Naive thymus-derived CD4-positive, alpha-beta T cell (primary cell): ENCODE measurements at regions of chr2 and their contacts with region 1.

Region 1: DNA sequence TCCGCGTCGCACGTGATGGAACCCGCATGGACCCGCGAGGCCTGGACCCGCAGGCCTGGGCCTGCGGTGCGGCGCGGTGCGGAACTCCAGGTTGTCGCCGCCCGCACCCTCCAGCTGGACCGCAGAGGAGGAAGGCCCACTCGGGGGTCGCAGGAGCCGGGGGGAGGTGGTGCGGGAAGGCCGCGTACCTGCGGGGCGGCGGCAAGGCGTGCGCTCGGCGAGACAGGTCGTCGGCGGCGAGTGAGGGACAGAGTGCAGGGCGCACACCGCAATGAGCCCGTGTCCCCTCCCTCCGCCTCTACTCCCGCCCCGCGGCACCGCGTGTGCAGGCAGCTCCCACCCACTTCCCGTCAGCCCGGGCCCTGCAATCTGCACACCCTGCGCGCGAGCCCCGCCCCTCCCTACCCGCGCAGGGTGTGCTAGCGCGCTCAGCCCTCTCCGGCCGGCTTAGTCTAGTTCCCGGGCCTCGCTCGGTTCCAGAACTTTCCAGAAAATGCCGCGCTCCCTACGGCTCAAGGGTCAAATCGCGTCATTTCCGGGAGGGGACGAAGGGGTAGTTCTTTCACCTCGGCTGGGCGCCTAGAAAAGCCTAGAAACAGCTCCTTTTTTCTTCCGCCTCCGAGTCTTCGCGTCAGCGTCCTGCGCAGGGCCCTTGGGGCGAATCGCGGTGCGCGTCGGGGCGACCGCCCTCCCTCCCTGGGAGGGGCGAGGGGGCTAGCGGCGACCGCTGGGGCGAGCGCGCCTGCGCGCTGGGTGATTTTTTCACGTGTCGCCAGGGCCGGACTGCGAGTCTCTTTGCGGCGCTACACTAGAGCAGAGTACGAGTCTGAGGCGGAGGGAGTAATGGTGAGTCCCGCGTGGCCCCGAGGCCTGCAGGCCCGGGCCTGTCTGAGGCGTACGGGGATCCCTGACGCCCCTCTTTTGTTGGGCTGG is at the starts of genes HSPD1 and HSPE1:
- DNase-seq: peak; percentile 89 to 98 (median 97)
- ATAC-seq: peak; percentile 93
- H3K4me3 ChIP-seq: peak within 1 kb of the TSS; percentile 94
- H3K4me3 Mint-ChIP-seq: peak within 1 kb of the TSS; percentile 84 to 100 (median 94)
- H3K27ac ChIP-seq: peak within 1 kb of the TSS; percentile 90
- H3K27ac Mint-ChIP-seq: peak within 1 kb of the TSS; percentile 83 to 98 (median 95)
- H3K4me1 ChIP-seq: peaks cover 17 to 41% of the 10 kb centered on the region in 2 donors
- H3K4me1 Mint-ChIP-seq: peaks cover 31 to 69% (median 57%) of the 10 kb centered on the region in 7 donors
- H3K27me3 ChIP-seq: no peaks in the 10 kb centered on the region
- H3K27me3 Mint-ChIP-seq: no peaks in the 10 kb centered on the region
- total RNA-seq, gene HSPD1: 127 to 276 (median 137) TPM
- total RNA-seq, gene HSPE1: 46.3 to 127 (median 52.2) TPM

Region 2: DNA sequence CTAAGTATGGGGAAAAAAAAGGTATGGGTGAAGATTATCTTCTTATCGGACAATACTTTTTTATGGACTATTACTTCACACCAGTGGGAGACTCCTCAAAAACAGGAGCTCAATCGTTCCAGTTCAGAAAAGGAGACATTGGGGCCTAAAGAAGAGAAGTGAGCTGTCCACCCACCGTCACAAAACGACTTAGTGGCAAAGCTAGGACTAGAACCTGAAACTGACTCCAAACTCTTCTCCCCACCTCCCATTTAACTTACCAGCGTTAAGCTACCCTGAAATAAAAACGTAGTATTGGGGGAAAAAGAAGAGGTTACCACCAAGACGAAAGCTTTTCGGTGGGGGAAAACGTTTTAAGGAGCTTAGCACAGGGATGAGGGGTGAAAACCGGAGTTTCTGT is 700.9 kb before region 1 on chr2:
- CTCF ChIA-PET with region 1: no interaction called
- POLR2A ChIA-PET with region 1: no interaction called
- intact Hi-C with region 1: loop called in 1 of 2 experiments (anchors 5 kb)
- DNase-seq: peak in 1 of 9 donors; percentile 1
- ATAC-seq: peak; percentile 1
- H3K4me3 ChIP-seq: peak overlapping the region; percentile 98
- H3K4me3 Mint-ChIP-seq: peak overlapping the region; percentile 85 to 99 (median 96)
- H3K27ac ChIP-seq: peak overlapping the region; percentile 73
- H3K27ac Mint-ChIP-seq: peak overlapping the region; percentile 89 to 99 (median 91)
- H3K4me1 ChIP-seq: peaks cover 4 to 6% of the 10 kb centered on the region in 2 donors
- H3K4me1 Mint-ChIP-seq: peaks cover 17 to 52% (median 38%) of the 10 kb centered on the region in 7 donors
- H3K27me3 ChIP-seq: no peaks in the 10 kb centered on the region
- H3K27me3 Mint-ChIP-seq: peaks cover 0 to 4% (median 4%) of the 10 kb centered on the region in 5 donors

Region 3: GRCh38 chr2:197209742-197210408 is 290.0 kb before region 1 on chr2:
- CTCF ChIA-PET with region 1: no interaction called
- POLR2A ChIA-PET with region 1: no interaction called
- intact Hi-C with region 1: loop called in 1 of 2 experiments (anchors 10 kb)
- DNase-seq: peak in 5 of 9 donors; percentile 34 to 73 (median 50)
- ATAC-seq: peak; percentile 23
- H3K4me3 ChIP-seq: peak overlapping the region; percentile 12
- H3K4me3 Mint-ChIP-seq: peak overlapping the region; percentile 61 to 86 (median 78)
- H3K27ac ChIP-seq: peak overlapping the region; percentile 82
- H3K27ac Mint-ChIP-seq: peak overlapping the region; percentile 79 to 100 (median 98)
- H3K4me1 ChIP-seq: peaks cover 93 to 98% of the 10 kb centered on the region in 2 donors
- H3K4me1 Mint-ChIP-seq: peaks cover 76 to 99% (median 97%) of the 10 kb centered on the region in 7 donors
- H3K27me3 ChIP-seq: no peaks in the 10 kb centered on the region
- H3K27me3 Mint-ChIP-seq: no peaks in the 10 kb centered on the region

Region 4: DNA sequence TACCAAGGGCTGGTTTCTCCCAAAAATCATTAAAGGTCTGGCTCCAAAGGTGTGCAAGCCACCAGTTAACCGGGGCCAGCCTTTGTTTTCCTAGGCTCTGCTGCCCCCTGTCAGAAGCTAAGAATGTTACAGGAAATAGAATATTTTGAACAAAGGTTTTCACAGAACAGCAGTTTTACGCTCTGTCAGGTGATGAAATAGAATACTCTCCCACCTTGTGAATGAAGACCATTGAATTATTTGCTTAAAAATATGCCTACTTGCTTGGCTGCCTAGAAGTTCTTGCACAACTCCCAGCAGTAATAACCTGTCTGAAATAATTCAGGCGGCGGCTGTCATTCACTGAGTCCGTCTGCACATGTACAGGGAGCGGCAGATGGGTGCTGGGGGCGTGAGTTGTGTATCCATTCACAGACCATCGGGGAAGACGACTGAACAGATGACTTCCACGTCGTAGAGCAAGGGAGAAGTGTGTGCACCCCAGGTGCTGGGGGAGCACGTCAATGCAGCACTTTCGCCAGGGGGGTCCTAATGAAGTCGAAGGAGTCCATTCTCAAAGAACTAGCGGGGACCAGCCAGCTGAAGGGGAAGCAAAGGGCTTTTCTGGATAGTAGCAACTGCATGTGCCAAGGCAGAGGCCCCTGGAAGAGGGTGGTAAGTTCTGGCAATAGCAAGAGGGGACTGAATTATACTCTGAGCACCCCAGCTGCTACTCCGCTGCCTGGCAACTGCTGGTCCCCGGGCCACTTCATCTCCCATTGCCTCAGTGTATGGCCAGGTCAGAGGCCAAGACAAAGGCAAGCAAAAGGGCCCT is 121.2 kb before region 1 on chr2:
- CTCF ChIA-PET with region 1: no interaction called
- POLR2A ChIA-PET with region 1: no interaction called
- intact Hi-C with region 1: no loop called
- DNase-seq: peak; percentile 26 to 72 (median 61)
- ATAC-seq: peak; percentile 83
- H3K4me3 ChIP-seq: no peak overlapping the region
- H3K4me3 Mint-ChIP-seq: peak overlapping the region in 2 of 10 donors; percentile 21 to 47
- H3K27ac ChIP-seq: no peak overlapping the region
- H3K27ac Mint-ChIP-seq: peak overlapping the region in 2 of 9 donors; percentile 45 to 75
- H3K4me1 ChIP-seq: peaks cover 0 to 6% of the 10 kb centered on the region in 2 donors
- H3K4me1 Mint-ChIP-seq: peaks cover 9 to 27% (median 16%) of the 10 kb centered on the region in 7 donors
- H3K27me3 ChIP-seq: no peaks in the 10 kb centered on the region
- H3K27me3 Mint-ChIP-seq: peaks cover 0 to 12% (median 0%) of the 10 kb centered on the region in 5 donors

Region 5: GRCh38 chr2:197434541-197435513 is 65.0 kb before region 1 on chr2 and contains the start of gene SF3B1:
- CTCF ChIA-PET with region 1: interaction called, 3 read pairs
- POLR2A ChIA-PET with region 1: interaction called, 49 read pairs
- intact Hi-C with region 1: loop called (anchors 1 kb)
- DNase-seq: peak; percentile 98 to 99 (median 99)
- ATAC-seq: peak; percentile 99
- H3K4me3 ChIP-seq: peak within 1 kb of the TSS; percentile 98
- H3K4me3 Mint-ChIP-seq: peak within 1 kb of the TSS; percentile 88 to 100 (median 98)
- H3K27ac ChIP-seq: peak within 1 kb of the TSS; percentile 98
- H3K27ac Mint-ChIP-seq: peak within 1 kb of the TSS; percentile 100
- H3K4me1 ChIP-seq: peaks cover 28 to 46% of the 10 kb centered on the region in 2 donors
- H3K4me1 Mint-ChIP-seq: peaks cover 34 to 60% (median 49%) of the 10 kb centered on the region in 7 donors
- H3K27me3 ChIP-seq: no peaks in the 10 kb centered on the region
- H3K27me3 Mint-ChIP-seq: peaks cover 0 to 3% (median 0%) of the 10 kb centered on the region in 5 donors
- total RNA-seq, gene SF3B1: 330 to 737 (median 528) TPM

Region 6: DNA sequence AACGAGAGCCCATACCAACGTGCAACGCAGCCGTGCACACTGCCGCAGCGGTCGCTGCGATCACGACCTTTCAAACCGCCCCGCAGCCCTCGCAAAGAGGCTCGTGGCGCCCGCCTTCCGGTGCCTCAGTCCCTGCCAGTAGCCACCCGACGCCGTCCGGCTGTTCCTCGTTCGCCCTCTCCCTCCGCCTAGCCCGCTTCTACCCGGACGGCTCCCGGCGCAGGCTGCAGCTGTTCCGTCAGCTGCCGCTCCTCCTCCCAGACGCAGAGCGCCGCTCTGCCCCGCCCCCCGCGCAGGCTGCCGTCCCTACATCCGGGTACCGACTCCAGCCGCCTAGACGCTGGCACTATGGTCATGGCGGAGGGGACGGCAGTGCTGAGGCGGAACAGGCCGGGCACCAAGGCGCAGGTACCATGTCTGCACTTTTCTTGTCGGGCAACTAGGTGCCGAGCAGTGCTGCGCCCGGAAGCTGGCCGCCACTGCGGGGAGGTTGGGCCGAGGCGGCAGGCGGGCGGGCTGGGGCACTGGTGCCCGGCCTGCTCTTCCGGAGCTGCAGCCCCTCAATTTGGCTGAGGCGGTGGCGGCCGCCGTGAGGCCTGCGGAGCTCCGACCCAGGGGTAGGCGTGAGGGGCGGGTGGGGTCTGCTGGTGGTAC is 16.0 kb after region 1 on chr2 and contains the start of gene MOB4:
- CTCF ChIA-PET with region 1: interaction called, 5 read pairs
- POLR2A ChIA-PET with region 1: interaction called, 100 read pairs
- intact Hi-C with region 1: loop called (anchors 1 kb)
- DNase-seq: peak; percentile 87 to 98 (median 92)
- ATAC-seq: peak; percentile 97
- H3K4me3 ChIP-seq: peak within 1 kb of the TSS; percentile 75
- H3K4me3 Mint-ChIP-seq: peak within 1 kb of the TSS; percentile 85 to 99 (median 98)
- H3K27ac ChIP-seq: peak within 1 kb of the TSS; percentile 86
- H3K27ac Mint-ChIP-seq: peak within 1 kb of the TSS; percentile 88 to 99 (median 95)
- H3K4me1 ChIP-seq: peaks cover 10 to 12% of the 10 kb centered on the region in 2 donors
- H3K4me1 Mint-ChIP-seq: peaks cover 28 to 49% (median 40%) of the 10 kb centered on the region in 7 donors
- H3K27me3 ChIP-seq: no peaks in the 10 kb centered on the region
- H3K27me3 Mint-ChIP-seq: no peaks in the 10 kb centered on the region
- total RNA-seq, gene MOB4: 16.1 to 22.5 (median 17.9) TPM

Region 7: GRCh38 chr2:197777823-197778407 is 278.1 kb after region 1 on chr2:
- CTCF ChIA-PET with region 1: interaction called, 3 read pairs
- POLR2A ChIA-PET with region 1: no interaction called
- intact Hi-C with region 1: loop called (anchors 5 kb)
- DNase-seq: peak in 5 of 9 donors; percentile 30 to 50 (median 37)
- ATAC-seq: no peak
- H3K4me3 ChIP-seq: no peak overlapping the region
- H3K4me3 Mint-ChIP-seq: no peak overlapping the region
- H3K27ac ChIP-seq: no peak overlapping the region
- H3K27ac Mint-ChIP-seq: no peak overlapping the region
- H3K4me1 ChIP-seq: no peaks in the 10 kb centered on the region
- H3K4me1 Mint-ChIP-seq: peaks cover 0 to 6% (median 0%) of the 10 kb centered on the region in 7 donors
- H3K27me3 ChIP-seq: no peaks in the 10 kb centered on the region
- H3K27me3 Mint-ChIP-seq: peaks cover 4 to 26% (median 9%) of the 10 kb centered on the region in 5 donors